HCT116 (cell line): ENCODE measurements at regions of chr16 and their contacts with region 1.

Region 1: GRCh38 chr16:2905431-2906387 is 6.0 kb upstream of the FLYWCH1 start:
- DNase-seq: peak; percentile 99
- ATAC-seq: peak; percentile 78
- H3K4me3 ChIP-seq: peak overlapping the region; percentile 76 to 93
- H3K27ac ChIP-seq: peak overlapping the region; percentile 97
- H3K4me1 ChIP-seq: peaks cover 12 to 22% of the 10 kb centered on the region in 2 experiments
- H3K27me3 ChIP-seq: no peaks in the 10 kb centered on the region
- CTCF ChIP-seq: no peak
- POLR2A ChIP-seq: no peak
- RAD21 ChIP-seq: no peak

Region 2: DNA sequence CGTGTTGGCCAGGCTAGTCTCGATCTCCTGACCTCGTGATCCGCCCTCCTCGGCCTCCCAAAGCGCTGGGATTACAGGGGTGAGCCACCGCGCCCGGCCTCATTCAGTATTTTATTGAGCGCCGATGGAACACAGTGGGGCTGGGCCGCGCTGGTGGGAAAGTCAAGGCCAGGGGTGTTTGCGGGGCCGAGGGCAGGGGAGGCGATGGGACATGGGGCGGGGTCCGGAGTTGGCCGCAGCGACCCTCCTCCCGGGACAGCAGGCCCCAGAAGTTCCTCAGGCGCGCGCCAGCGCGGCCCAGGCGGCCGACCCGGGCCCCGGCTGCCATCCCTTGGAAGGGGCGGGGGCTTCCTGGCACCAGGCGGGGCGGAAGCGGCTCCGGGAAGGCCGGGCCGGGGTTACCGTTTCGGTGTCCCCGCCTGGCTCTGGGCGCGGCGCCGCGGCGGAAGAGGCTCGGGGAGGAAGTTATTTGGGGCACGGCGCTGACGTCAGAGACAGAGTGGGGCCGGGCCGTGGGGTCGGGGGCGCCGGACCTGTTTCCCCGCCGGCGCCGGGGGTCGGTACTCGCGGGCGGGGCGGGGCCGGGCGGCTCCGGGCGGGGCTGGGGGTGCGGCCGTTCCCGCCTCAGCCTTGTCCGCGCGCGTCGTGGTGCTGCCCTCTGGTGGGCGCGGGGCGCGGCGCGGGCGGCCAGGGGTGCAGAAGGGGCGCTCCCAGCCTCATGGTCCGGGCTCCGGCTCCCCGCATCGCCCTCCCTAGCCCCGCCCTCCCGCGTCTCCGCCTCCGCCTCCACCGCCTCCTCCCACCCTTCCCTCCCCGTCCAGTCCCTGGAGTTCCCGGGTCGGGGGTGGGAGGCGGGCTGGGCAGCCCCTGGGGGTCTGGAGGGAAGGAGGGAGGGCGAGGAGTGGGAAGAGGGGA is 184.7 kb before region 1 on chr16:
- CTCF ChIA-PET with region 1: no interaction called
- POLR2A ChIA-PET with region 1: no interaction called
- RAD21 ChIA-PET with region 1: no interaction called
- intact Hi-C with region 1: no loop called
- DNase-seq: peak; percentile 62
- ATAC-seq: peak; percentile 85
- H3K4me3 ChIP-seq: peak overlapping the region; percentile 55 to 61
- H3K27ac ChIP-seq: peak overlapping the region; percentile 89
- H3K4me1 ChIP-seq: peaks cover 28 to 43% of the 10 kb centered on the region in 2 experiments
- H3K27me3 ChIP-seq: no peaks in the 10 kb centered on the region
- CTCF ChIP-seq: peak; percentile 28 to 57 (median 29); a peak in 3 of 6 replicates
- POLR2A ChIP-seq: no peak
- RAD21 ChIP-seq: no peak

Region 3: GRCh38 chr16:2867987-2868789 is 37.5 kb before region 1 on chr16:
- CTCF ChIA-PET with region 1: interaction called, 10 read pairs
- POLR2A ChIA-PET with region 1: interaction called, 6 read pairs
- RAD21 ChIA-PET with region 1: no interaction called
- intact Hi-C with region 1: no loop called
- DNase-seq: peak; percentile 86
- ATAC-seq: peak; percentile 96
- H3K4me3 ChIP-seq: peak overlapping the region; percentile 55 to 73
- H3K27ac ChIP-seq: peak overlapping the region; percentile 92
- H3K4me1 ChIP-seq: peaks cover 8 to 24% of the 10 kb centered on the region in 2 experiments; a peak in 3 of 4 replicates
- H3K27me3 ChIP-seq: no peaks in the 10 kb centered on the region
- CTCF ChIP-seq: peak; percentile 95 to 96 (median 96)
- POLR2A ChIP-seq: peak; percentile 90
- RAD21 ChIP-seq: peak; percentile 100

Region 4: DNA sequence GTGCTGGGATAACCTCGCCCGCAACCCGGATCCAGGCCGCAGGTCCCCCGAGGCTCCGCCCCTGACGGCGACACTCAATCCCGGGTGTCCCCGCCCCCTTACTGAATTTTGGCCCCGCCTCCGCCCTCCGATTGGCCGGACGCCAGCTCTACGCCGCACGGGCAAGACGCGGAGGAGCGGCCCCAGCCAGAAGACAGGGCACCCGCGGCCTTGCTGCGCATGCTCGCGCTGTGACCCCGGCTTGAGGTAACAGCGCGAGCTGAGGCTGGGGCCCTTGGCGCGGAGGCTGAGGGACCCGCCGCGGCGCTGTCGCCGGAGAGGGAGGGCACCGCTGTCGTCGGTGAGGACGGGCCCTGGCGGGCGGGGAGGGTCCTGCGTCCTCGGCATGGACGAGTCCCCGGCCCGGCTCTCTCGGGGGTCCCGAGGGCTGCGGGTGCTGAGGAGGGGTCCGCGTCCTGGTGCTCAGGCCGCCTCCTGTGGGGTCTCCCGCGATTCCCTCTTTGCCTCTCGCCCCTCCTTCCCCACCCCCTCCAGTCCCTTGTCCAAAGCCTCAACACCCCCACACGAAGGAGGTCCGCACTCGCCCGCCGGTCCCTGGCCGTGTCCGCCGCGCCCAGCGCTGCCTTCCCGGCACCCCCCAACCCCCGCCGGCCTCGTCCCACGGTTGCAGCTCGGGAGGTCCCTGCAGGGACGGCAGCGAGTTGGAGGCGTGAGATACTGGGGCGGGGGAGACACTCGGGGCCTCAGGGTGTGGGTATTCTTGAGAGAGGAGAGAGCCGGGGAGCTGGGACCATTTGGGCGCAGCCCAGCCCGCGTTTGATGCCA is 22.5 kb before region 1 on chr16 and contains the start of gene FLYWCH2:
- CTCF ChIA-PET with region 1: interaction called, 7 read pairs
- POLR2A ChIA-PET with region 1: interaction called, 21 read pairs
- RAD21 ChIA-PET with region 1: no interaction called
- intact Hi-C with region 1: loop called (anchors 1 kb)
- DNase-seq: peak; percentile 91
- ATAC-seq: peak; percentile 78
- H3K4me3 ChIP-seq: peak within 1 kb of the TSS; percentile 80 to 98
- H3K27ac ChIP-seq: peak within 1 kb of the TSS; percentile 78
- H3K4me1 ChIP-seq: peaks cover 9 to 18% of the 10 kb centered on the region in 2 experiments
- H3K27me3 ChIP-seq: no peaks in the 10 kb centered on the region
- CTCF ChIP-seq: no peak
- POLR2A ChIP-seq: peak; percentile 80
- RAD21 ChIP-seq: no peak
- total RNA-seq, gene FLYWCH2: 33.7 TPM

Region 5: GRCh38 chr16:2919511-2920255 is 14.0 kb after region 1 on chr16:
- CTCF ChIA-PET with region 1: interaction called, 5 read pairs
- POLR2A ChIA-PET with region 1: interaction called, 39 read pairs
- RAD21 ChIA-PET with region 1: no interaction called
- intact Hi-C with region 1: no loop called
- DNase-seq: peak; percentile 57
- ATAC-seq: peak; percentile 54
- H3K4me3 ChIP-seq: no peak overlapping the region
- H3K27ac ChIP-seq: no peak overlapping the region
- H3K4me1 ChIP-seq: peaks cover 28 to 38% of the 10 kb centered on the region in 2 experiments
- H3K27me3 ChIP-seq: no peaks in the 10 kb centered on the region
- CTCF ChIP-seq: peak; percentile 75 to 94 (median 79)
- POLR2A ChIP-seq: no peak
- RAD21 ChIP-seq: peak; percentile 87